ENCODE measurements at regions of chr16 and their contacts with region 1.

Region 1: DNA sequence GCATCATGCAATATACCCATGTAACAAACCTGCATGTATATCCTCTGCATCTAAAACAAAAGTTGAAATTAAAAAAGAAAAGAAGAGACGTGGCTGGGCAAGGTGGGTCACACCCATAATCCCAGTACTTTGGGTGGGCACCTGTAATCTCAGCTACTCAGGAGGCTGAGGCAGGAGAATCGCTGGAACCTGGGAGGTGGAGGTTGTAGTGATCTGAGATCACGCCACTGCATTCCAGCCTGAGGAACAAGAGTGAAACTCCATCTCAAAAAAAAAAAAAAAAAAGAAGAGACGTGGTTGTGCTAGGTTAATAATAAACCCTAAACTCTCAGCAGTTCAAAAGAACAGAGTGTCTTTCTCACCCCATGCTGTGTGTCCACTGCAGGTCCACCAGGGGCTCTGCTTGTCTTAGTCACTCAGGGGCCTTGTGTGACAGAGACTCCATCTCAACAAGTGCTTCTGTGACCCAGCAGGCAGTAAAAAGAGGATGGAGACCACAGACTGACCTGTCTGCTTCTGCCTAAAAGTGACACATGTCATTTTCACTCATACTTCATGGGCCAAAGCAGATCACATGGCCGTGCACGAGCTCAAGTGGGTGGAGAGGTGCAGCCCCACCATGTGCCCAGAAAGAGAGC is 22.3 kb upstream of the N4BP1 start:
- DNase-seq: peak in 1 of 2 experiments; percentile 17
- H3K4me3 ChIP-seq: no peak overlapping the region
- H3K27ac ChIP-seq: no peak overlapping the region
- H3K4me1 ChIP-seq: no peaks in the 10 kb centered on the region; a peak in 1 of 7 replicates
- H3K27me3 ChIP-seq: no peaks in the 10 kb centered on the region
- CTCF ChIP-seq: no peak
- EP300 ChIP-seq: no peak
- POLR2A ChIP-seq: no peak
- RAD21 ChIP-seq: no peak

Region 2: DNA sequence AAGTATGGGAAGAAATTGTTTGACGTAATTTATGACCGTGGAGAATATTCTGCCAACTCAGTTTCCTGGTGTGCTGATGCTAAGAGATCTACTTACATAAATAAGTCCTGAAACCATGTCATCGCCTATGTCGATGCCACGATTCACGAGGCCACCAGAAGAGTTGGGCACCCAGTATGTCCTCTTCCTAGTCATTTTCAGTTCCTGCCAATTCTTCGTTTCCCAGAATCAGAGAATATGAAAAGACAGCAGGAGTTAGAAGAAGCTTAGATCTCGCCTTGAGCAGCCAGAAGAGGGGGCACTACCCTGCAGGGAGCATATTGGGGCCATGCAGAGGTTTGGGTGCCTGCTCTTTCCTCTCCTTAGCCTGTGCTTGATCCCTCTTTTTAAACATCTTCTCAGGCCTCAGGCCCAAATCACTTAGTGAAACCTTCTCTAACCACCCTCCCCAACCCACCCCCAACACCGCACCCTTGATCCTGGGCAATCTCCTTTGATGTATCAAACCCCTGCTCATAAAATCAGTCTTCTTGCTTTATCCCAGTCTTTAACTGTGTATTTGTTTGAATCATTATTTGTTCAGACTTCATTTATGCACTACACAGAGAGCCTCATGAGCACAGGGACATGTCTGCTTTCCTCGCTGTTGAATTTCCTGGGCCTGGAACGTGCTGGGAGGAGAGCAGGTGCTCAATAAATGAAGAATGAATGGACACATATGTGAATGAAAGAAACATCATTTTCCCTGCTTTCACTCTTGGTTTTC is 400.3 kb before region 1 on chr16:
- CTCF ChIA-PET with region 1: interaction called, 12 read pairs
- POLR2A ChIA-PET with region 1: no interaction called
- DNase-seq: peak; percentile 29 to 61
- H3K4me3 ChIP-seq: no peak overlapping the region
- H3K27ac ChIP-seq: no peak overlapping the region
- H3K4me1 ChIP-seq: no peaks in the 10 kb centered on the region
- H3K27me3 ChIP-seq: no peaks in the 10 kb centered on the region
- CTCF ChIP-seq: peak; percentile 58 to 75 (median 68)
- EP300 ChIP-seq: no peak
- POLR2A ChIP-seq: no peak
- RAD21 ChIP-seq: peak; percentile 67 to 74

Region 3: DNA sequence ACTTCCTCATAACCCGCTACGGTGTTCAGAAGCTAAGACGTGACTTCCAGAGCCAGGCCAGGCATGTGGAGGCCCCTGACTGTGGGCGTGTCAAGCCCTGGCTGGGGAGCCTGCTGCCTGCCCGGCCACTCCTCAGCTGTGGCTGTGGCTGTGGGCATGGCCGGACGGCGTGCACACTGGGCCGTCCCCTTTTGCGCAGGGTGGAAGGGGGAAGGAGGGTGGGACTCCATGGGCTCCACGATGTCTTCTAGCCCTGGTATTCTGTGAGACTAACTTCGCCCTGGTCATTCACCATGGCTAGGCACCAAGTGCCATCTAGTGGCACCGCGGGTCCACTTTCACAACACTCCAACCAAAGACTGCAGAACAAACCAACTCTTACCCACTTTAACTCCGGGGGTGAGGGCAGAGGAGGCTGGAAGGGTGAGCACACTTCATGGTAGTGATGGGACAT is 90.2 kb before region 1 on chr16:
- CTCF ChIA-PET with region 1: interaction called, 12 read pairs
- POLR2A ChIA-PET with region 1: interaction called, 3 read pairs
- DNase-seq: no peak
- H3K4me3 ChIP-seq: no peak overlapping the region
- H3K27ac ChIP-seq: no peak overlapping the region
- H3K4me1 ChIP-seq: no peaks in the 10 kb centered on the region; a peak in 1 of 7 replicates
- H3K27me3 ChIP-seq: no peaks in the 10 kb centered on the region
- CTCF ChIP-seq: peak; percentile 46 to 62 (median 51)
- EP300 ChIP-seq: no peak
- POLR2A ChIP-seq: no peak
- RAD21 ChIP-seq: peak; percentile 67 to 77

Region 4: DNA sequence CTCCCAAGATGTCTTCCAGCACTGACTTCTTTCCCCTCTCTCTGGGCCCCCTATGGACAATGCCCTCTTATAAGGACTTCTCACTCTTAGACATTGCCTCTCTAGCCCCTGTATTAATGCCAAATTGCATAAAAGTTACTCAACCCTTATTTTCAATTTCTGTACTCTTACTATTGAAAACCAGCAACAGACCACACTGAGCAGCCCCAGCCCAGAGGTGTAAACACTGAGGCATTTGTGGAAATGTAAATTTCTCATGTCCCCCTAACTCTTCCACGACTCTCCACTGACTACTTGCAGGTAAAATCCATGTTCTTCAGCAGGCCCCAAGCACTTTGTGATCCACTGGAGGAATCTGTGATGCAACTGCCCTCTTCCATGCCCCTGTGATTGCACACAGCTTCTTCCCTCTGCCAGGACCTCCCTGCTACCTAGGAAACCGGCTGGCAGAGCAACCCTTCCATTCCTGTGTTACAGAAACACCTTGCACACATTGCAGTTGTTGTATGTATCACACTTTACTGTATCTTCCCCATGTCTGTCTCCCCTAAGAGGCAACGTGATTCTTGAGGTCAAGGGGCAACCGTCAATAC is 26.6 kb before region 1 on chr16:
- CTCF ChIA-PET with region 1: interaction called, 10 read pairs
- POLR2A ChIA-PET with region 1: interaction called, 4 read pairs
- DNase-seq: no peak
- H3K4me3 ChIP-seq: peak overlapping the region in 1 of 4 experiments; percentile 18; a peak in 2 of 8 replicates
- H3K27ac ChIP-seq: no peak overlapping the region; the same call in 1 of the 2 replicates
- H3K4me1 ChIP-seq: peaks cover 7 to 32% (median 25%) of the 10 kb centered on the region in 4 experiments; a peak in 5 of 7 replicates
- H3K27me3 ChIP-seq: no peaks in the 10 kb centered on the region
- CTCF ChIP-seq: no peak
- EP300 ChIP-seq: no peak
- POLR2A ChIP-seq: no peak
- RAD21 ChIP-seq: no peak

Region 5: GRCh38 chr16:48659940-48660339 is 27.7 kb after region 1 on chr16:
- CTCF ChIA-PET with region 1: no interaction called
- POLR2A ChIA-PET with region 1: no interaction called
- DNase-seq: no peak
- H3K4me3 ChIP-seq: no peak overlapping the region
- H3K27ac ChIP-seq: no peak overlapping the region
- H3K4me1 ChIP-seq: no peaks in the 10 kb centered on the region
- H3K27me3 ChIP-seq: no peaks in the 10 kb centered on the region
- CTCF ChIP-seq: no peak
- EP300 ChIP-seq: no peak
- POLR2A ChIP-seq: no peak
- RAD21 ChIP-seq: no peak

Region 6: GRCh38 chr16:48790151-48790550 is 157.9 kb after region 1 on chr16:
- CTCF ChIA-PET with region 1: no interaction called
- POLR2A ChIA-PET with region 1: no interaction called
- DNase-seq: no peak
- H3K4me3 ChIP-seq: no peak overlapping the region
- H3K27ac ChIP-seq: no peak overlapping the region
- H3K4me1 ChIP-seq: peaks cover 0 to 2% (median 0%) of the 10 kb centered on the region in 4 experiments; a peak in 1 of 7 replicates
- H3K27me3 ChIP-seq: no peaks in the 10 kb centered on the region
- CTCF ChIP-seq: no peak
- EP300 ChIP-seq: no peak
- POLR2A ChIP-seq: no peak
- RAD21 ChIP-seq: no peak

Measured in H1 (cell line).